AG04450 (cell line): ENCODE measurements at regions of chr10 and their contacts with region 1.

Region 1: DNA sequence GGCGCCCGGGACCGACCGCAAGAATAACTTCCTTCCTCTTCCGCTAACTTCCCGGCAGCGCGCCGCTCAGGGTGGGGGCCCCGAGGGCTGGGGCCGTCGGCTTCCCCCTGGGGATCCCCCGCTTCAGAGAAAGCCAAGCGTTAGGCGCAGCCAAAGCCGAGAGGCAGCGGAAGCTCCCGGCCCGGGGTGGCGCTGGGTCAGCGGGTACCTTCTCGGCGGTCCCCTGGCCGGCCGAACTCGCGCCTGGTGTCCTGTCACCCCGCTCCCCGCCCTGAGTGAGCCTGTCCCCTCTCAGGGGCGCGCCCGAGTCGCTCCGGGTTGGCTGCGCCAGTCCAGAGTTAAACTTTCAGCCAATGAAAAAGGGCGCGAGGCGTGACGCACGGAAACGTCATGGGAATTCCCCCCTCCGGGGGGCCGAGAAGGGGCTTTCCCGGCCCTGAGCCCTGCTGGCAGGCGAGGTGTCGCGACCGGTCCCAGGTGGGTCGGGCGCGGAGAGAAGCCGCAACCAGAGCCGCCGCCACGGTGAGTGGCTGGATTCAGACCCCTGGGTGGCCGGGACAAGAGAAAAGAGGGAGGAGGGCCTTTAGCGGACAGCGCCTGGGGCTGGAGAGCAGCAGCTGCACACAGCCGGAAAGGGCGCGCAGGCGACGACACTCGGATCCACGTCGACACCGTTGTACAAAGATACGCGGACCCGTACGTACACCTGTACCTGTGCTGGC is 1.3 kb upstream of the NFKB2 start:
- DNase-seq: peak; percentile 82
- H3K4me3 ChIP-seq: peak overlapping the region; percentile 82
- H3K27ac ChIP-seq: peak overlapping the region; percentile 99
- H3K27me3 ChIP-seq: peaks cover 3% of the 10 kb centered on the region
- CTCF ChIP-seq: no peak

Region 2: DNA sequence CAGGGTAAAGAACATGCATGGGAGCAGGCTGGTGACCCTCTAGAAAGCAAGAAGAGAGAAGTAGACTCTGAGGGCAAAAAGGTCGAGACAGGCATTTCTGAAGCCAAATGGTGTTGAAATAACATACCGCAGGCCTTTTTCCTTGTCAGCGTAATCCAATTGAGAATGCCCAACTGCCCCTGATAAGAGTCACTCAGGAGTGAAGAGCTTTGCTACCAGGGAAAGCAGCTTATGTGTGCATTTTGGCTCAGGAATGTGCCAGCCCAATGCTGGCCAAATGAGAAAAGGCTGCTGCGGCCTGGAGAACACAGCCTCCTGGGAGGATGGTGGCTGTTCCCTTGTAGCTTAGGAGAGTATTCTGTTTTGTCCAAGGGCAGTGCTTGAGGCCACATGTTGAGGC is 60.1 kb before region 1 on chr10:
- CTCF ChIA-PET with region 1: no interaction called
- POLR2A ChIA-PET with region 1: no interaction called
- DNase-seq: no peak
- H3K4me3 ChIP-seq: no peak overlapping the region
- H3K27ac ChIP-seq: peak overlapping the region; percentile 11
- H3K27me3 ChIP-seq: no peaks in the 10 kb centered on the region
- CTCF ChIP-seq: no peak

Region 3: GRCh38 chr10:102384053-102384452 is 10.2 kb before region 1 on chr10:
- CTCF ChIA-PET with region 1: interaction called, 28 read pairs
- POLR2A ChIA-PET with region 1: interaction called, 4 read pairs
- DNase-seq: no peak
- H3K4me3 ChIP-seq: no peak overlapping the region
- H3K27ac ChIP-seq: no peak overlapping the region
- H3K27me3 ChIP-seq: no peaks in the 10 kb centered on the region
- CTCF ChIP-seq: peak; percentile 27; the same call in 1 of the 2 replicates

Region 4: DNA sequence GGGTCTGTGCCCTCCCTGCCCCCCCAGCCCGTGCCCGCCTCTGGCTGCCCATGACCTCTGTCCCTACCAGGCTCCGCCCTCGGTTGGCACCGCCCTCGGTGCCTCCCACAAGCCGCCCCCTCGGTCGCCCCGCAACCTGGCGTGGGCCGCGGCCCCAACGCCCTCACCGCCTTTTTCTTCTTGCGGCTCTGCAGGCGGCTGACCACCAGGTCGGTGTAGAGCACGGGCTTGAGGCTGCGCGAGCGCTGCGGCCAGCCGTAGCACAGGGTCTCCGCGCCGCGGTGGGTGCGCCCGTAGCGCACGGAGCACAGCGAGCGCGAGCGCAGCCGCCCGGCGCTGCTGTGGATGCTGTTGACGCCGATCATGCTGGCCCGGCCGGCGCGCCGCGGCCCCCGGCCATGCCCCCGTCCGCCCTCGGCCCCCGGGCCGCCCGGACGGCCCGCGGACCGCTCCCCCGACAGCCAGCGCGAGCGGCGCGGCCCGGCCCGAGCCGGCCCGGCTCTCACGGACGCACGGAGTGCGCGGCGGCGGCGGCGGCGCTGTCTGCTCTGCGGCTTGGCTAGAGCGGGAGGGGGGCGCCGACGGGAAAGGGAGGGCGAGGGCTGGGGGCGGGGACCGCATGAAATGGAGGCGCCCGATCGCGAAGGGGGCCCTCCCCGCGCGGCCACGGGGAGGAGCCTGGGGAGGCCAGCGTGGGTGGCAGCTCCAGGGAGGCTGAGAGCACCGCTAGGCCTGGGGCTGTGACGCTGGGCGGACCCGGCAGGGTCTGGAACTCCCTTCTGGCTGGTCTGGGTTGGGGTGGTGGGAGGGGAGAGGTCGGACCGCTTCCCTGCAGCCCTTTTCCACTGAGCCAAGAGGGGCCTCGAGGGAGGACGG is 14.7 kb after region 1 on chr10:
- CTCF ChIA-PET with region 1: interaction called, 20 read pairs
- POLR2A ChIA-PET with region 1: interaction called, 3 read pairs
- DNase-seq: no peak
- H3K4me3 ChIP-seq: peak overlapping the region; percentile 59
- H3K27ac ChIP-seq: peak overlapping the region; percentile 11
- H3K27me3 ChIP-seq: peaks cover 31% of the 10 kb centered on the region
- CTCF ChIP-seq: no peak